ENCODE measurements at regions of chr16 and their contacts with region 1.

Region 1: GRCh38 chr16:89700100-89700648 is 1.3 kb downstream of the SPATA2L start:
- DNase-seq: peak; percentile 99
- ATAC-seq: peak; percentile 70 to 74

Region 2: GRCh38 chr16:89615596-89616090 is 84.5 kb before region 1 on chr16:
- intact Hi-C with region 1: no loop called
- DNase-seq: no peak
- ATAC-seq: peak in 1 of 2 donors; percentile 24

Region 3: GRCh38 chr16:89764711-89765201 is 64.6 kb after region 1 on chr16:
- intact Hi-C with region 1: no loop called
- DNase-seq: peak; percentile 33
- ATAC-seq: peak; percentile 34 to 66

Region 4: DNA sequence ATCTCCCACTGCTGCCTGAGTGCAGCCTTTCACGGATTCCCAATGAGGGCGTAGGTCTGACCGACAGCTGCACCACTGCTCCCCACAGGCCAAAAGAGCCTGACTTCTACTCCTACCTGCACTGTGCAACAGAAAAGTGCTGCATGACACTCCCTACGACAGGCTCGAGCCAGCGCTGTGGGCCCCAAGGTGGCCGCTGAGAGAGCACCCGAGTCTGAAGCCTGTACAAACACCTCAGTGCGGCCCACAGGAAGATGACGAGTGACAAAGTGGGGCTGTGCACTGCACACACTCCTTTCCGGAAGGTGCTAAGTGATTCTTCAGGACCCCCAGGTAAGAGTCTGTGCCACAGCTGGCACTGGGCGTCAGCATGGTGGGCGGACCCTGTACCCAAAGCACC is 75.0 kb after region 1 on chr16:
- intact Hi-C with region 1: no loop called
- DNase-seq: no peak
- ATAC-seq: no peak

Region 5: GRCh38 chr16:89798832-89799370 is 98.7 kb after region 1 on chr16:
- intact Hi-C with region 1: loop called in 1 of 2 experiments (anchors 10 kb)
- DNase-seq: peak; percentile 66
- ATAC-seq: peak; percentile 86 to 95

Measured in left cardiac atrium (tissue), 4 donors.